Calu3 (cell line): ENCODE measurements at regions of chr6 and their contacts with region 1.

Region 1: DNA sequence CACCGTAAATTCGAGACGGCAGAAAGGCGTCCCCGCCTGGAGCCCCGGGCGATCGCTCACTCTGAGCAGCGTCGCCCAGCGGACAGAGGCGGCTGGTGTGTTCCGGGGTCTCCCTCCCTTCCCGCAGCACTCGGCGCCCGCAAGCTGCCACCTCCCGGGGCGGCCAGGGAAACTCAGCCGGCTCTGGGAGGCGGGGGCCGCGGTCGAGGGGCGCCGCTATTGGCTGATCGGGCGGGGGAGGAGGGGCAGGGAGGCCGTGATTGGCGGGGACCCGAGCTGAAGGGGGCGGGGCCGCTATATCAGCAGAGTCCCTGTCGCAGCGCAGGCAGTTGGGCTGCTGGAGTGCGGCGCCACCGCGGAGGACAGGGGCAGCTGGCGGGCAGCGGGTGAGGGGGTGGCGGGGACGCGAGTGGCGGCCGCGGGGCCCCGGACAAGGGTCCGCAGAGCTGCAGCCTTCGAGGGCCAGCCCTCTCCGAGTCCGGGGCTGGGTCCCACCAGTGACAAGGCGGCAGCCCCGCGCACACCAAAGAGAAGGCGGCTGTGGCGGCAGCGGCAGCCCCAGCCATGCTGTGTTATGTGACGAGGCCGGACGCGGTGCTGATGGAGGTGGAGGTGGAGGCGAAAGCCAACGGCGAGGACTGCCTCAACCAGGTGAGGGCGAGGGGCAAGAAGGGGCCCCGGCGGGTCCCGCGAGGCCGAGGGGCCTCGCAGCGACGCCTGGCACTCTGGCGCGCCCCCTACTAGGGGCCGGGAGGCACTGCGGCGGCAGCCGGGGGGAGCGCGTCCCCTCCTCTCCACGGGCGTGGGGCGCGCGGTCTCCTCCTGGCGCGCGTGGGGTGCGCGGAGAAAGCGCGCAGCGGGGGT is at the start of gene MYLIP:
- DNase-seq: peak; percentile 95
- H3K4me3 Mint-ChIP-seq: peak within 1 kb of the TSS; percentile 90
- H3K27ac Mint-ChIP-seq: peak within 1 kb of the TSS; percentile 58
- H3K4me1 Mint-ChIP-seq: no peaks in the 10 kb centered on the region
- H3K27me3 Mint-ChIP-seq: peaks cover 16% of the 10 kb centered on the region
- CTCF ChIP-seq: peak; percentile 59
- total RNA-seq, gene MYLIP: 8.1 and 10.1 TPM in 2 replicates

Region 2: GRCh38 chr6:15893556-15894268 is 235.3 kb before region 1 on chr6:
- CTCF ChIA-PET with region 1: interaction called, 4 read pairs
- intact Hi-C with region 1: loop called (anchors 5 kb)
- DNase-seq: no peak
- H3K4me3 Mint-ChIP-seq: no peak overlapping the region
- H3K27ac Mint-ChIP-seq: no peak overlapping the region
- H3K4me1 Mint-ChIP-seq: no peaks in the 10 kb centered on the region
- H3K27me3 Mint-ChIP-seq: no peaks in the 10 kb centered on the region
- CTCF ChIP-seq: no peak

Region 3: DNA sequence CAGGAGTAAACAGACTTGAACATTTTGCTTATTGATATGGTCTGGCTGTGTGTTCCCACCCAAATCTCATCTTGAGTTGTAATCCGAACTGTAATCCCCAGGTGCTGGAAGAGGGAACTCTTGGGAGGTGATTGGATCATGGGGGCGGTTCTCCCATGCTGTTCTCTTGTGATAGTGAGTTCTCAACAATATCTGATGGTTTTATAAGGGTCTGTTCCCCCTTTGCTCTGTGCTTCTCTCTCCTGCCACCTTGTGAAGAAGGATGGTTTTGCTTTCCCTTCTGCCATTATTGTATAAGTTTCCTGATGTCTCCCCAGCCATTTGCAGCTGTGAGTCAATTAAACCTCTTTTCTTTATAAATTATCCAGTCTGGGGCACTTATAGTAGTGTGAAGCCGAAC is 39.9 kb after region 1 on chr6:
- CTCF ChIA-PET with region 1: no interaction called
- intact Hi-C with region 1: loop called (anchors 5 kb)
- DNase-seq: no peak
- H3K4me3 Mint-ChIP-seq: no peak overlapping the region
- H3K27ac Mint-ChIP-seq: no peak overlapping the region
- H3K4me1 Mint-ChIP-seq: no peaks in the 10 kb centered on the region
- H3K27me3 Mint-ChIP-seq: no peaks in the 10 kb centered on the region
- CTCF ChIP-seq: no peak

Region 4: DNA sequence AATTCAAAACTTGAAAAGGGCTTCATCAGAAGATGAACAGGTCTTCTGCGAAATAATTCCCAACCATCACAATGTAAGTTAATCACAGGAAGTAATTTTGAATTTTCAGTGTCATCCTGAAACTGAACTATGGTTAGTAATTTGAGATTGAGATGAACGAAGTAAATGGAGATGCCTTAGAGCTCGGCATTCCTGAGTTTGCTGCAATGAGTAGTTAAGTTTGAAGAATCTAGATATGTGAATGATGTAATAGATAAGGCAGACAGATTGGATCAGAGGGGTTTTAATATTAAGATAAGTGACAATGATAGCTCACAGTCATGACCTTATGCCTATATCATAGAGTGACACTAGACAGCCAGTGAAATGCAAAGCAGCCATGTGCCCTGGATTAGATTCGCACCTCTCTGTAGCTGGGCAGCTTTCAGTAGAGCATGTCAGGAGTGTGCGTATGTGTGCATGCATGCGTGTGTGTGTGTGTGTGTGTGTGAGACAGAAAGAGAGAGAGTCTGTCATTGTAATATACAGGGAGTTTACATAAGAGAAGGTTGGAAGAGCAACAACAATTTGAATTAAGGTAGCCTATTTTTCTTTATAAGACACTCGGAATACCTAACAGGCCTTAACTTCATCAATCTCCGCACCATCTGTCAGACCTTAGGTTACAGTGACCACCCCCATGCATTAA is 342.4 kb after region 1 on chr6:
- CTCF ChIA-PET with region 1: no interaction called
- intact Hi-C with region 1: no loop called
- DNase-seq: no peak
- H3K4me3 Mint-ChIP-seq: no peak overlapping the region
- H3K27ac Mint-ChIP-seq: no peak overlapping the region
- H3K4me1 Mint-ChIP-seq: no peaks in the 10 kb centered on the region
- H3K27me3 Mint-ChIP-seq: no peaks in the 10 kb centered on the region
- CTCF ChIP-seq: no peak